ENCODE measurements at regions of chr17 and their contacts with region 1.

Region 1: DNA sequence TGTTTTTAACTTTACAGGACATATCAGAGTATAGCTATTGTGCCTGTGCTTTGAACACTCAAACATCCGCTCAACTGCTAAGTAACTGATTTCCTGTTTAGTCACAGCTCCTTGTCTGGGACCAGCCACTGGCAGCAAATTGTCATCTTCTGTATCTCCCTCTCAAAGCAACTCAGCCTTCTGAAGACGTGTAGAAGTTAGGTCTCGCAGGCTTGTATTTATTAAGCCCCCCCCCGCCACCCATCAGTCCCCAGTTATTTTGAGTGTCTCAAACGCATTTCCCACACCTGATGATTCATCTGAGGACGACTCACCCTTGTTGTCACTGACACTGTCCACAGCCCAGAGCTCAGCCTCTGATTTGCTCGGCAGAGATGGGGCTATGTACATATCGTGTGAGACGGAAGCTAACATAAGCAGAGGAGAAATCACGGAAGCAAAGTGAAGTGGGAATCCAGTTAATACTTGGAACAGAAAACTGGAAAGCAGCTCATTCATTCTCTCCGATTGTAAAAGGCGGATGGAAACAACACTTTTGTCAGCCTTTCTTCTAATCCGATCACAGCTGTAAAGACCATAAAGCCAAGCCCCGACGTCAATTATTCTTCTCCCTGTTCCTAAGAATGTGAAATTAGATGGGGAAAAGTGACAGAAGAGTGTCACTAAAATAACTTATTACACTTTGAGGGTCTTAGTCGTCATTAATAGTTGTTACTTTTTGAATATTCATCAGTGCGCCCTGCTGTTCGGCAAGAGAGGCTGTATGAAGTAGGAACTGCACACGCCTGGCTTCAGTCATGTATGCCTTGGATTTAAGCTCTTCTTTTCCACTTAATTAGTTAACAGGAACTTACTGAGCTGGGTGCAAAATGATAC is 64.2 kb downstream of the PITPNC1 start:
- DNase-seq: peak; percentile 80
- H3K4me3 Mint-ChIP-seq: peak overlapping the region; percentile 77
- H3K27ac Mint-ChIP-seq: peak overlapping the region; percentile 100
- H3K4me1 Mint-ChIP-seq: peaks cover 82% of the 10 kb centered on the region
- H3K27me3 Mint-ChIP-seq: no peaks in the 10 kb centered on the region

Region 2: GRCh38 chr17:67390646-67391384 is 50.5 kb before region 1 on chr17:
- CTCF ChIA-PET with region 1: interaction called, 24 read pairs
- DNase-seq: peak; percentile 73
- H3K4me3 Mint-ChIP-seq: peak overlapping the region; percentile 47
- H3K27ac Mint-ChIP-seq: peak overlapping the region; percentile 87
- H3K4me1 Mint-ChIP-seq: peaks cover 66% of the 10 kb centered on the region
- H3K27me3 Mint-ChIP-seq: no peaks in the 10 kb centered on the region

Region 3: DNA sequence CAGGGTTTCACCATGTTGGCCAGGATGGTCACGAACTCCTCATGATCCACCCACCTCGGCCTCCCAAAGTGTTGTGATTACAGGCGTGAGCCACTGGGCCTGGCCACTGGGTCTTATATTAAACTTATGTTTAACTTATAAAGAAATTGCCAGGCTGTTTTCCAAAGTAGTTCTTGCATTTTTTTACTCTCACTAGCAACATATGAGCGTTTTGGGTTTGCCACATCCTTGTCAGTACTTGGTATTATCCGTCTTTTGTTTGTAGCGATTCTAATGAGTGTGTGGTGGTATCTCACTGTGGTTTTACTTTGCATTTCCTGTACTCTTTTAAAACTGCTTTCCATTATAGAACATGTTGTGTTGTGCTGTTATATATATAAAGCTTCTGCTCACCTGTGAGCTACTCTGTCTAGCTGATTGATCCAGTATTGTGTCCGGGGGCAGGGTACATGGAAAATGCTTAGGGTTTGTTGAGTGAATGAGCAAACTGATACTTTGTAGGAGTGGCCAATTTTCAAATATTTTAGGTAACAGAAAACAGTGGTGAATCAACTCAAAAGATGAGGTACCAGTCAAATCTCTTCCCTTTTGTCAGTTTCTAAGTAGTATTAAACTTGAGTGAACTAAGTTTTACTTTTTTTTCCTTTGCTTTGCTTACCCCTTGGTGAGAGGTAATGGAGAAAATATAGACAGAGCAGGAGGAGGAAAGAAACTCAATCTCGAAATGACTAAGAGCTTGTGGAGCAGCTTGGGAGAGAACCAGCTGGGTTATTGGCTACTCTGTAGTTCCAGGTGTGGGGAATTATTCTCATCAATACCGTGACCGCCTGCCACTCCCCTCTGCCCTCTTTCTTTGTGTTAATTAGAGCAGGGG is 11.6 kb after region 1 on chr17:
- CTCF ChIA-PET with region 1: interaction called, 13 read pairs
- DNase-seq: peak; percentile 64
- H3K4me3 Mint-ChIP-seq: peak overlapping the region; percentile 59
- H3K27ac Mint-ChIP-seq: peak overlapping the region; percentile 100
- H3K4me1 Mint-ChIP-seq: peaks cover 92% of the 10 kb centered on the region
- H3K27me3 Mint-ChIP-seq: no peaks in the 10 kb centered on the region

Region 4: DNA sequence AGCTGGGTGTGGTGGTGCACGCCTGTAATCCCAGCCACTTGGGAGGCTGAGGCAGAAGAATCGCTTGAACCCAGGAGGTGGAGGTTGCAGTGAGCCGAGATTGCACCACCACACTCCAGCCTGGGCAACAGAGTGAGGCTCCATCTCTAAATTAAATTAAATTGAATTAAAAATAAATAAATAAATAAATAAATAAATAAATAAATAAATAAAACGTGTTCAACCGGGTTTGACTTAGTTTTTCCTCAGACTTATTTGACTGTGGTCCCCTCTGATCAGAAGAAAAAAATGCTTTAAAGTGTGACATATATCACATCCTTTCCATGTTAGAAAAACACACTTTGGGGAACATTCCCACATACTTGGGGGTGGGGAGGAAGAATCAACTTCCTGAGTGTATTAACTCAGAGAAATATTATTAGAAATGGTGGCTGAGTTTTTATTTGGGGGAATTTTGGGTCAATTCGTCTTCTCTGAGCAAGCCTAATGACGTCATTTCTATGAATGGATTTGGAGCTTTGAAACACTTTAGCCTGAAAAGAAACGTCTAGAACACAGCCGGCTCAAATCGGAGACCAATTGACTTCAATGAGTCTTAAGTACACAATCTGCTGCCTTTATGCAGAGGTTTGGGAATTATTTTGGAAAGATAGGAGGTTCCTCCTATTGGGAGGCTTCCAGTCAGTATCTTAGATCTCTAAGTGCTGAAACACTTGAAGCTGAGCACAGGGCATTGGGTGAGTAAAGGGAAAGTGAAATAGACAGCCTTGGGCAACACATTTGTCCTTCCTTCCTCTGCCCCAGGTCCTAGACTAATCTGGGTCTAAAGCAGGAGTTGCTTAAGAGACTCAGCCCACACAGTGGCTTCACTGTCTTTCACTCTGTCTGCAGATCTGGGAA is 68.3 kb after region 1 on chr17:
- CTCF ChIA-PET with region 1: no interaction called
- DNase-seq: no peak
- H3K4me3 Mint-ChIP-seq: no peak overlapping the region
- H3K27ac Mint-ChIP-seq: no peak overlapping the region
- H3K4me1 Mint-ChIP-seq: peaks cover 16% of the 10 kb centered on the region
- H3K27me3 Mint-ChIP-seq: no peaks in the 10 kb centered on the region

Measured in activated naive CD4-positive, alpha-beta T cell treated with anti-CD3 and anti-CD28 coated beads, Interleukin-2, amount 10 ng/mL, durations not matched to agents 7 days and 5 days (primary cell).